ENCODE measurements at regions of chr1 and their contacts with region 1.

Region 1: GRCh38 chr1:186212544-186213226 is 162.4 kb downstream of the TPR start:
- DNase-seq: no peak
- H3K4me3 Mint-ChIP-seq: no peak overlapping the region
- H3K27ac Mint-ChIP-seq: no peak overlapping the region
- H3K4me1 Mint-ChIP-seq: no peaks in the 10 kb centered on the region
- H3K27me3 Mint-ChIP-seq: peaks cover 24% of the 10 kb centered on the region

Region 2: DNA sequence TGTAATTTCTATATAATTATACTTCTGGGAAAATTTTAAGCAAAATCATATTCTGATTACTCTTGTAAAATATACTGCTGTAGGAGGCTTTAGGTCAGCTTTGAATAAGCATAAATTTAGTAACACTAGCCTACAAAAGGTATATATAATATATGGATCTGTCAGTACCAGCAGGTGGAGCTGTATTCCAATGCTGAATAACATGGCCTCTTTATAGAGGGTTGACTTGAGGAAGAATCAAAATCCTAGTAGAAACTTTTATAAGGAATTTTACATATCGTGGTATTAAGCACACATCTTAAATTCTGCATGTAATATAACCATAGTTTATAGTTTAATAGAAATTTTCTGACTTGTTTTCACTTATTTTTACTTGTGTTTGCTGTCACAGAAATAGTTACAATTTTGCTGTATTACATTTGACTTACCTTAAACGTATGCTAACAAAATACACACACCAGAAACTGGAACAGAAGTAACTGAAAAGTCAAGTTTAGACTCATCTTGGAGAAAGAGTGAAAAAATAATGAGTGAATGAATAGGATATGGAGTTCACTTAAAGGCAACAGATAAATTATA is 399.2 kb before region 1 on chr1:
- intact Hi-C with region 1: loop called (anchors 1 kb)
- DNase-seq: no peak
- H3K4me3 Mint-ChIP-seq: no peak overlapping the region
- H3K27ac Mint-ChIP-seq: no peak overlapping the region
- H3K4me1 Mint-ChIP-seq: no peaks in the 10 kb centered on the region
- H3K27me3 Mint-ChIP-seq: peaks cover 3% of the 10 kb centered on the region

Region 3: DNA sequence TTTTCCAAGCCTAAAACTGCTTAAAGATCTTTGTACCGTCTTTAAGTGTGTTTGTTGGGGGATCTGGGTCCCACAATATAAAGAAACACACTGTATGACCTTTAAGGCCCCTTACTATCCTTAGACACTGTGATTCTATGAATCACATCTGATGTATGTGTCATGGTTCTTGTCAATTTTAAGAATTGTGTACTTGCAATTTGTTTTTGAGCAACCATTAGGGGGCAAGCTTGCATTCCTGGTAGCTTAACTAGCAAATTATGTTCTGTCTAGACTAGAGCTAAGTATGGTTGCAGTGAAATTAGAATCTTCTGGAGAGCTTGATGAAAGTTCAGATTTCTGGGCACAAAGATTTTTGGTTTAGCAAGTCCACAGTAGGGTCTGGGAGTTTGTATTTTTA is 57.1 kb before region 1 on chr1:
- intact Hi-C with region 1: loop called (anchors 1 kb)
- DNase-seq: no peak
- H3K4me3 Mint-ChIP-seq: no peak overlapping the region
- H3K27ac Mint-ChIP-seq: no peak overlapping the region
- H3K4me1 Mint-ChIP-seq: no peaks in the 10 kb centered on the region
- H3K27me3 Mint-ChIP-seq: peaks cover 3% of the 10 kb centered on the region

Region 4: DNA sequence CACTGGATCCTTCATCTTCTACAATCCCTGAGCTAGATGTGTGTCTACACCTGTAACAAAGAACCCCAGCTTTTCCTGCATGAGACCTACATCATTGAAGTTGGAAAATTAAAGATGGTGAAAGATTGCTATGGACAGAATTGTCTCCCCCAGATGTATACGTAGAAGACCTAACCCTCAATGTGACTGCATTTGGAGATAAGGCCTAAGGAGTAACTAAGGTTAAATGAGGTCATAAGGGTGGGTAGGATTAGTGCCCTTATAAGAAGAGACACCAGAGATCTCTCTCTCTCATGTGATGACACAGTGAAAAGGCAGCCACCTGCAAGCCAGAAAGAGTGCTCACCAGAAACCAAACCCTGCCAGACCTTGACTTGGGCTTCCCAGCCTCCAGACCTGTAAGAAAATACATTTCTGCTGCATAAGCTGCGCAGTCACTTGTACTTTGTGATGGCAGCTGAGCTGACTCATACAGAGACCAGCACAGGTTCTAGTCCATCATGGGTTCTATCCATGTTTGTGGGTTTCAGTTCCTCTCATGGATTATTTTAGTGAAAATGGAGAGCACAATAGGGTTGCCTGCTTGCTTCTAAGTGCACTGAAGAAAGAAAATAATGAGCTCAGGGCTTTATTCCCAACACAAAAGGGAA is 18.5 kb before region 1 on chr1:
- intact Hi-C with region 1: no loop called
- DNase-seq: no peak
- H3K4me3 Mint-ChIP-seq: no peak overlapping the region
- H3K27ac Mint-ChIP-seq: no peak overlapping the region
- H3K4me1 Mint-ChIP-seq: no peaks in the 10 kb centered on the region
- H3K27me3 Mint-ChIP-seq: peaks cover 10% of the 10 kb centered on the region